ENCODE measurements at regions of chr6 and their contacts with region 1.

Region 1: DNA sequence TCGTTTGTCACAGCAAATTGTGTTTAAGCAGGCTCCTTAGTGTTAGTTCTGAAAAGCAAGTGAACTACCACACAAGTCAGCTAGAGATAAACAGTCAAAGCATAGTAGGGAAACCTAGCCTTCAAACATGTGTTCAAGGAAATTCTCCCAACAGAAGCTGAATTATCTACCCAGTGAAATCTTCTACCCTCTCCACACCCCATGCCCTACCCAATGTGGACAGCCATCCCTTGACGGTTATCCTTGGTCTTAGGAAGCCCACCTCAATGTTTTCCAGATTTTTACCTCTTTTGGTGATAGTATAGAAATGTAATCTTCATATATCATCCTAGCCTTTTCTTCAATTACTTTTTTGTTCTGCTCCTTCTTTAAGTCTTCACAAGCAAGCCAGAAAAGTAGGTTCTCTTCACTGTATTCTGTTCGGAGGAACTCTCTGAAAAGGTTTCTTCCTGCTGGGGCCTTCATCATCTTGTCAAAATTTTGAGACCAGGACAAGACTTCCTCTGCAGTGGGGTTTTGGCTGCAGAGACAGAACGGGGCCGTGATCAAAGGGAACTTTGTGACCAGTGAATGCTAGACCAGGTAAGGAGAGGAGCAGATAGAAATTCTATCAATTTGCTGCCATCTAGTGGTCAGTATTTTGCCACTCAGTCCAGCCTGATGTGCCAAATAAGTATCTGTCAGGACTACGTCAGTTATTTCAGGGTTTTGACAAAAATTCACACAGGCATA is 21.6 kb upstream of the MTRF1L start:
- DNase-seq: no peak
- ATAC-seq: peak; percentile 90
- H3K4me3 ChIP-seq: no peak overlapping the region
- H3K27ac ChIP-seq: no peak overlapping the region
- H3K4me1 ChIP-seq: no peaks in the 10 kb centered on the region
- H3K27me3 ChIP-seq: no peaks in the 10 kb centered on the region
- CTCF ChIP-seq: peak; percentile 86

Region 2: DNA sequence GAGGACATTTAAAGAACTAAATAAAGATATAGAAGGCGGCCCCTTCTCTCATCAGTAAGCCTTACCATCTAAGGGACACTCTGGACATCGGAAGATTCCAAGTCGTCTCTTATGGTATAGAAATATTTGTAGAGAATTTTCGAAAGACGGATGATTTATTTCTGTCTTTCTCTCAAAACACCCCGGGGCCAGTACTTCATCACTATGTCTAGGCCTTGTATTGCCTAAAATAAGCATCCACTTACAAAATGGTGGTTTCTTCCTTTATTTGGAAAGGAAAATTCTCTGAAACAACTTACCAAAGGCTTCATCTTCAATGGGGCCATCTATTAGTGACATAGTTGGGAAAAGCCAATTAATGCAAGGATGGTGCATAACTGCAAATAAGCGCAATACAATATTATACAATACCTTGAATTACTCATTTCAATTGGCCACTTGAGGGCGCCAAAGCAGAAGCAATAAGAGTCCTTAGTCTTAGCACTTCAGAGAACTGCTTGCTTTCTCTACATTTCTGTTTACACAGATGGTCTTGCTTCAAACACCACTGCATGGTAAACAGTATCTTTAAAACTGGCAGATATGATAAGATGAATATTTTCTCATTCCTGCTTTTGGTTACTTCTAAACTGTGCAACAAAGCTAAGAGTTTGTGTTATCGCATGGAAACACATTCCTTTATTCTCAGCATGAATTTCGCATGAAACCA is 160.4 kb before region 1 on chr6:
- intact Hi-C with region 1: loop called (anchors 10 kb)
- DNase-seq: no peak
- ATAC-seq: peak; percentile 83
- H3K4me3 ChIP-seq: no peak overlapping the region
- H3K27ac ChIP-seq: no peak overlapping the region
- H3K4me1 ChIP-seq: no peaks in the 10 kb centered on the region
- H3K27me3 ChIP-seq: no peaks in the 10 kb centered on the region
- CTCF ChIP-seq: peak; percentile 76

Region 3: DNA sequence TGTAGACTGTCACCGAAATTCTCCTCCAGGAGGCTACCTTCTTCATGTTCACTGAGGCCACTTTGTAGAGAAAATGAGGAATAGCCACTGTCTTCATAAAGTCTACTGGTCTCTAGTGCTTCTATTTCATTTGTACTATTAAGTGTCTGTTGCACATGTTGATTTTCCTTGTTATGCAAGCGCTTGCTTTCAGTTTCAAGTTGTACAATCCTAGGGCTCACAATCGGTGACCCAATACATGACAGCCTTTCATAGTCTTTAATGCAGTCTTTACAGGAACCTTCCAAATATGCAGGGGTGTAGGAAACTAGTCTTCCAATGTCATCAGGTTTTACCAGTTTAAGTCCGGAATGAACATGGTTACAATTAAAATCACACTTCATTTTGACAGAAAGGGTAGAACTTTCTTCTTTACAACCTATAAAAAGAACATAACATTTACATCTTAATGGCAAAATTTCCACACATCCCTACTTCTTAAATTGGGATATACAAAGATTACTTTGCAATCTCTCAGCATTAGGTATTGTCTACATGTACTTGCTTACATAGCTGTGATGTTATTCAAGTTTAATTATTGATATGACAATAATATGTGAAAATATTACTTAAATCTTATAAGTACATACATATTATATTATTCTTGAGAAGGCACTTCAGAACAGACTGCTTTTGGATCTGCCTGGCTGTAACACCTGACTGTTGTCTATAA is 48.8 kb before region 1 on chr6:
- intact Hi-C with region 1: no loop called
- DNase-seq: no peak
- ATAC-seq: peak; percentile 92
- H3K4me3 ChIP-seq: no peak overlapping the region
- H3K27ac ChIP-seq: no peak overlapping the region
- H3K4me1 ChIP-seq: peaks cover 6% of the 10 kb centered on the region
- H3K27me3 ChIP-seq: no peaks in the 10 kb centered on the region
- CTCF ChIP-seq: no peak

Region 4: GRCh38 chr6:153084409-153084808 is 60.3 kb after region 1 on chr6:
- intact Hi-C with region 1: no loop called
- DNase-seq: no peak
- ATAC-seq: no peak
- H3K4me3 ChIP-seq: no peak overlapping the region
- H3K27ac ChIP-seq: no peak overlapping the region
- H3K4me1 ChIP-seq: no peaks in the 10 kb centered on the region
- H3K27me3 ChIP-seq: no peaks in the 10 kb centered on the region
- CTCF ChIP-seq: no peak

Measured in upper lobe of right lung (tissue), 1 donor.